HepG2 (cell line): ENCODE measurements at regions of chr1 and their contacts with region 1.

Region 1: GRCh38 chr1:35577071-35577998 is 4.2 kb downstream of the TFAP2E start:
- DNase-seq: no peak
- ATAC-seq: no peak
- H3K4me3 ChIP-seq: no peak overlapping the region
- H3K27ac ChIP-seq: no peak overlapping the region
- H3K4me1 ChIP-seq: peaks cover 28% of the 10 kb centered on the region
- H3K27me3 ChIP-seq: peaks cover 0 to 3% of the 10 kb centered on the region in 2 experiments; a peak in 1 of 5 replicates
- CTCF ChIP-seq: no peak
- EP300 ChIP-seq: no peak
- POLR2A ChIP-seq: no peak
- RAD21 ChIP-seq: no peak

Region 2: GRCh38 chr1:35592991-35593694 is 15.8 kb after region 1 on chr1:
- CTCF ChIA-PET with region 1: no interaction called
- POLR2A ChIA-PET with region 1: interaction called, 3 read pairs
- in situ Hi-C with region 1: no loop called
- intact Hi-C with region 1: loop called (anchors 2 kb)
- DNase-seq: no peak
- ATAC-seq: peak; percentile 50
- H3K4me3 ChIP-seq: no peak overlapping the region
- H3K27ac ChIP-seq: no peak overlapping the region
- H3K4me1 ChIP-seq: peaks cover 15% of the 10 kb centered on the region
- H3K27me3 ChIP-seq: no peaks in the 10 kb centered on the region
- CTCF ChIP-seq: no peak
- EP300 ChIP-seq: no peak
- POLR2A ChIP-seq: no peak
- RAD21 ChIP-seq: no peak

Region 3: DNA sequence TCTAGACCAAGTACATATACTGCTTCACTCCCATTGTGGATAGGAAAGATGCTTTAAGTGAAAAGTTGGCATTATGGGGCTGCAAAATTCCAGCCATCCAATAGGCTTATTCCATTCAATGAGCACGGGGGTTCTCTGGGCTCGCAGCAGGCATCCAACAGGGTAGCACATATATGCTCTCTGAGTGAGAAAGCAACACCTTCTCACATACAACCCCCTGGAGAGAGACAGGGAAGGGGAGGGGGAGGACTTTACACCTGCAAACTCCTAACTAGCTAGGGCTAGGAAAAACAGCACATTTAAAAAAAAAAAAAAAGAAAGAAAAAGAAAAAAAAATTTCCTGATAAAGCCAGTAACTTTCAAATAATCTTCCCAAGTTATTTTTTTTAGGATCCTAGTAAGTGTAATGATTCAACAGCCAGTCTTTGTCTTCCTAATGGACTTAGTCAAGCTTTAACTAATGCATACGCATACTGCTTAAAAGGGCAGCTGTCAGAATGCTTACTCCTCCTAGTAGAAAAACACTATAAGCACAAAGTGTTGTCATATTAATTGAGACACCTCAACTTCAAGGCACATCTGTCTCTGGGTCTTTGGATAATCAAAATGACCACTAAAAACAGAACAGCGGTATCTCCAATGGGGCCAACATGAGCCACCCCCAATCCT is 45.3 kb after region 1 on chr1:
- CTCF ChIA-PET with region 1: no interaction called
- POLR2A ChIA-PET with region 1: no interaction called
- in situ Hi-C with region 1: no loop called
- intact Hi-C with region 1: no loop called
- DNase-seq: no peak
- ATAC-seq: no peak
- H3K4me3 ChIP-seq: no peak overlapping the region
- H3K27ac ChIP-seq: no peak overlapping the region
- H3K4me1 ChIP-seq: no peaks in the 10 kb centered on the region
- H3K27me3 ChIP-seq: no peaks in the 10 kb centered on the region
- CTCF ChIP-seq: no peak
- EP300 ChIP-seq: no peak
- POLR2A ChIP-seq: no peak
- RAD21 ChIP-seq: no peak